A549 (cell line): ENCODE measurements at regions of chr11 and their contacts with region 1.

Region 1: GRCh38 chr11:109946322-109946846 is 146.8 kb upstream of the ZC3H12C start:
- DNase-seq: peak; percentile 64 to 93
- ATAC-seq: peak; percentile 99
- H3K4me3 ChIP-seq: peak overlapping the region; percentile 36
- H3K27ac ChIP-seq: peak overlapping the region; percentile 87 to 90
- H3K4me1 ChIP-seq: peaks cover 8% of the 10 kb centered on the region; the same call in 2 of the 3 replicates
- CTCF ChIP-seq: peak; percentile 85
- EP300 ChIP-seq: no peak
- POLR2A ChIP-seq: no peak
- RAD21 ChIP-seq: peak; percentile 87 to 93

Region 2: DNA sequence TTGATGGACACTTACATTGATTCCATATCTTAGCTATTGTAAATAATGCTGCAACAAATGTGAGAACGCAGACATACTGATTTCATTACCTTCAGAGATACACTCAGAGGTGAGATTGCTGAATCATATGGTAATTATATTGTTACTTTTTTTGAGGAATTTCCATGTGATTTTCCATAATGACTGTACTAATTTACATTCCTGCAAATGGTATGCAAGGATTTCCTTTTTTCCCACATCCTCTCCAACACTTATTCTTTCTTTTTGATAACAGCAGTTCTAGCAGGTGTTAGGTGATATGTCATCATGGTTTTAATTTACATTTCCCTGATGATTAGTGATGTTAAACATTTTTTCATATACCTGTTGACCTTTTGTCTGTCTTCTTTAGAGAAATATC is 316.6 kb before region 1 on chr11:
- CTCF ChIA-PET with region 1: no interaction called
- POLR2A ChIA-PET with region 1: no interaction called
- DNase-seq: no peak
- ATAC-seq: no peak
- H3K4me3 ChIP-seq: no peak overlapping the region
- H3K27ac ChIP-seq: no peak overlapping the region
- H3K4me1 ChIP-seq: no peaks in the 10 kb centered on the region
- CTCF ChIP-seq: no peak
- EP300 ChIP-seq: no peak
- POLR2A ChIP-seq: no peak
- RAD21 ChIP-seq: no peak

Region 3: GRCh38 chr11:109795234-109795633 is 151.2 kb before region 1 on chr11:
- CTCF ChIA-PET with region 1: no interaction called
- POLR2A ChIA-PET with region 1: no interaction called
- DNase-seq: peak in 1 of 2 experiments; percentile 14
- ATAC-seq: no peak
- H3K4me3 ChIP-seq: no peak overlapping the region
- H3K27ac ChIP-seq: no peak overlapping the region
- H3K4me1 ChIP-seq: peaks cover 8% of the 10 kb centered on the region; the same call in 2 of the 3 replicates
- CTCF ChIP-seq: no peak
- EP300 ChIP-seq: no peak
- POLR2A ChIP-seq: no peak
- RAD21 ChIP-seq: no peak

Region 4: DNA sequence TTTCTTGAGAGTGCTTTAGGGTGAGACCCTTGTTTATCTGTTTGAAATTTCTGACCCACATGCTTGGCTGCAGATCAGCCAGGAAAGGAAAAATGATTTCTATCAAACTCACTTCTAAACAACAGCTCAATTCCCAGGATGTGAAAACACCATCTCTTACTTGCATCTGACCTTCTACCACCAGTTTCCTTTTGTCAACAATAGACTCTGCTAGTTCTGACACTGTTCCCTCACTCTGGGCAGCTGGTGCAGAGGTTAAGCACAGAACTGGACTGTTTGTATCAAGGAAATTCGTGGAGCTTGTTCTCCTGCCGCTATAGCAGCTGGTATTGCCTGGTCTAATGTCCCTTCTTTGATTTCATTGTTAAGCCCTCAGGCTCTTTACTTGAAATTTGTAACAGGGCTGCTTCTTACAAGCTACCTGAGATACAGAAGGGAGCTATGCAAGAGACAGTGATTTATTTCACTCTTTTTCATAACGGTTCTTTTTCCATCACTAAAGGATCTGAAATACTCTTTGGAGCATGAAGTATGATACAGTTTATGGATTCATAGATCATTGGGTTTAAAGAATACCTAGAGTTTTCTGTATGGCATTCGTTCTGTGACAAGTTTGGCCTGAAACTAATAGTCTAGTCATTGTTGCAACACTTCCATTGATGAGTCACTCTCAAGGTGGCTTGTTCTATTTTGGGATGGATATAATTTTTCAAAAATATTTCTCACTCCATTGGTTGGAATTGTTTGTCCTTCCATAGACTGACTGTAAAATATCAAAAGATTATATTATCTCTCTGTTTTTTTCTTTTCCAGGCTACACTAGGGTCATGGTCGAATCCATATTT is 31.4 kb before region 1 on chr11:
- CTCF ChIA-PET with region 1: no interaction called
- POLR2A ChIA-PET with region 1: no interaction called
- DNase-seq: no peak
- ATAC-seq: no peak
- H3K4me3 ChIP-seq: no peak overlapping the region
- H3K27ac ChIP-seq: no peak overlapping the region
- H3K4me1 ChIP-seq: peaks cover 6% of the 10 kb centered on the region; the same call in 2 of the 3 replicates
- CTCF ChIP-seq: no peak
- EP300 ChIP-seq: no peak
- POLR2A ChIP-seq: no peak
- RAD21 ChIP-seq: no peak

Region 5: DNA sequence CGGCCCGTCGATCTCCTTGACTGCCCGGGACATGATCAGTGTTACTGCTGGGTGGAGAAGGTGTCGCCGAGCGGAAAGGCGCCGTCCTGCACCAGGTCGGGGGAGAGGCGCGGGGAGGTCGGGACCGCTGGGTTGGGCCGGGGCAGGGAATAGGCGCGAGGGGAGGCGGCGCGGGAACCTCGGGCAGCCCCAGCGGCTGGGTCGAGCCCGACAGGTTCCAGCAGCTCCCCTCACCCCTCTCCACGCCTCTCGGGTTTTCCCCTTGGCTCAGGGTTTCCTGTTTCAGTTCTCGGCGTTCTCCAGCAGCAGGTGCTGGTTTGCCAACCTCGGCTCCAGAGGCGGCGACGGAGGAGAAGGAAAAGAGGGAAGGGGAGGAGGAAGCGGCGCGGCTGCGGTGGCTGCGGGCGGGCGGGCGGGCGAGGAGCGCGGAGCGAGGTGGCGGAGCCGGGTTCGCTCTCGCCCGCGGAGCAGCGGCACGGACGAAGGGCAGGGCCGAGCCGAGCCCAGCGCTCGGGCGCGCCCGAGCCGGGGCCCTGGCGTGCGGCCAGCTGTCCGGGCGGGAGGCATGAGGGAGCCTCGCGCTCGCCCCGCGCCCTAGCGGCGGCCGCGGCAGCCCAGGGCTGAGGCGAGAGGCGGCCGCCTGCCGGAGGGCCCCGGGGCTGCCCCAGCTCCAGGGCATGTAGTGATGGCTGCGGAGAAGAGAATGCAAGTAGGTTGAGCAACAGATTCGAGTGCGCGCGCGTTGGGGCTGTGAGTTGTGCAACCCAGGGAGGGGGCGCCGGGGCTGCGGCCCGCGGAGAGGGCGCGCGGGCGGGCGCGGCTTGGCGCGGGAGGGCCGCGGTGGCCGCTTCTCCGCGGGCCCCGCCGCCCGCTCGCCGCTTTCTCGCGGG is 146.4 kb after region 1 on chr11 and contains the start of gene ZC3H12C:
- CTCF ChIA-PET with region 1: interaction called, 12 read pairs
- POLR2A ChIA-PET with region 1: interaction called, 7 read pairs
- DNase-seq: peak; percentile 47 to 87
- ATAC-seq: peak; percentile 87 to 89
- H3K4me3 ChIP-seq: peak within 1 kb of the TSS; percentile 60
- H3K27ac ChIP-seq: peak within 1 kb of the TSS; percentile 92 to 97
- H3K4me1 ChIP-seq: peaks cover 40% of the 10 kb centered on the region
- CTCF ChIP-seq: peak; percentile 36
- EP300 ChIP-seq: 0 out of 5 replicates have a peak, but pooled peaks of 1 of the 2 experiments have one; percentile 13
- POLR2A ChIP-seq: peak; percentile 30
- RAD21 ChIP-seq: peak; percentile 37 to 52; a peak in 3 of 5 replicates
- polyA plus RNA-seq, gene ZC3H12C: 11.9 and 12.4 TPM in 2 replicates